T-cell (primary cell): ENCODE measurements at regions of chr17 and their contacts with region 1.

Region 1: GRCh38 chr17:67619555-67619954 is 98.2 kb upstream of the NOL11 start:
- DNase-seq: no peak
- ATAC-seq: no peak
- H3K4me3 ChIP-seq: no peak overlapping the region
- H3K4me3 Mint-ChIP-seq: no peak overlapping the region
- H3K27ac ChIP-seq: no peak overlapping the region
- H3K27ac Mint-ChIP-seq: no peak overlapping the region
- H3K4me1 ChIP-seq: no peaks in the 10 kb centered on the region
- H3K4me1 Mint-ChIP-seq: peaks cover 4 to 17% (median 7%) of the 10 kb centered on the region in 3 donors
- H3K27me3 ChIP-seq: no peaks in the 10 kb centered on the region
- H3K27me3 Mint-ChIP-seq: no peaks in the 10 kb centered on the region

Region 2: DNA sequence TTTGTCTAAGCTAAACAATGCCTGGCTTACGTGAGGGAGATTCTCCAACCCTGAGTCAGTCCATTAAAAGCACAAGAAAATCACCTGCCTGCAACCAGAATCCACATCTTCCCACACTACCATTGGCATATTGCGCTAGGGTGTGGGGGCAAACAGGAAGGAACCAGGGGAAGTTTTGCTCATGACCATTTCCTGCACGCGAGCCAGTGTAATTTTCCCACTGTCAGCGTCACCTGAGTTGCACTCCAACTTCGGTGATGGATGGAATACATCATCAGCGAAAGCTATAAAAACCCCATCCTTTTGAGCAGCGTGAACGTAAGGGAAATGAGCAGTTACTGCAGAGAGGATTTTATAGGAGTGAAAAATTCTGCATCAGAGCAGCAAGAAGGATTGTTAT is 69.7 kb before region 1 on chr17:
- CTCF ChIA-PET with region 1: interaction called in 1 of 2 experiments, 10 read pairs
- POLR2A ChIA-PET with region 1: no interaction called
- DNase-seq: no peak
- ATAC-seq: no peak
- H3K4me3 ChIP-seq: no peak overlapping the region
- H3K4me3 Mint-ChIP-seq: no peak overlapping the region
- H3K27ac ChIP-seq: no peak overlapping the region
- H3K27ac Mint-ChIP-seq: peak overlapping the region in 1 of 2 donors; percentile 59
- H3K4me1 ChIP-seq: peaks cover 0 to 13% of the 10 kb centered on the region in 2 experiments
- H3K4me1 Mint-ChIP-seq: peaks cover 27 to 51% (median 35%) of the 10 kb centered on the region in 3 donors
- H3K27me3 ChIP-seq: no peaks in the 10 kb centered on the region
- H3K27me3 Mint-ChIP-seq: no peaks in the 10 kb centered on the region

Region 3: GRCh38 chr17:67637917-67638641 is 18.5 kb after region 1 on chr17:
- CTCF ChIA-PET with region 1: no interaction called
- POLR2A ChIA-PET with region 1: no interaction called
- DNase-seq: no peak
- ATAC-seq: no peak
- H3K4me3 ChIP-seq: no peak overlapping the region
- H3K4me3 Mint-ChIP-seq: no peak overlapping the region
- H3K27ac ChIP-seq: no peak overlapping the region
- H3K27ac Mint-ChIP-seq: peak overlapping the region; percentile 34 to 49
- H3K4me1 ChIP-seq: no peaks in the 10 kb centered on the region
- H3K4me1 Mint-ChIP-seq: peaks cover 0 to 7% (median 6%) of the 10 kb centered on the region in 3 donors
- H3K27me3 ChIP-seq: no peaks in the 10 kb centered on the region
- H3K27me3 Mint-ChIP-seq: no peaks in the 10 kb centered on the region